AG04450 (cell line): ENCODE measurements at regions of chr17 and their contacts with region 1.

Region 1: DNA sequence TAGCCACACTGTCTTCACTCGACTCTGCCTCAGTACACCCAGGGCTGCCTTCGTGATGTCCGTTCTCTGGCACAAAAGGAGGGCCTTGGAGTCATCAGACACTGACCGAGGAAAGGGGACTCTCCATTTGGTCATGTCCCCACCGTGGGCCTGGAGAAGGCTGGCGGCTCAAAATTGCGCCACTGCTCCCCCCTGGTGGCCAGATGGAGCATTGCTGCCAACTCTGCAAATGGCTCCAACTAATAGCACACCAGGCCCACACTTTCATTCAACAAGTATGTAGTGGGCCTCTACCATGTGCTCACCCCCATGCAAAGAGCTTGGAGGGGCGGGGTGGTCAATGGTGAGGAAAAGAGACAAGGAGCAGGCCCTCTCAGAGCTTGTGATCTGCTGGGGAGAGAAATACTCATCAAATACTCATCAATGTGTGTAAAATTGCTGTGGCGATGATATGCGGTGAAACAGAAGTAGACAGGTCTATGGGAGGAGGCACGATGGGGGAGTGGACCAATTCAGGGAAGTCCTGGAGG is 5.2 kb upstream of the GRIN2C start:
- DNase-seq: no peak
- H3K4me3 ChIP-seq: no peak overlapping the region
- H3K27ac ChIP-seq: no peak overlapping the region
- H3K27me3 ChIP-seq: peaks cover 17% of the 10 kb centered on the region
- CTCF ChIP-seq: peak; percentile 94

Region 2: GRCh38 chr17:74736513-74737298 is 128.2 kb before region 1 on chr17 and contains the start of gene RAB37:
- CTCF ChIA-PET with region 1: interaction called, 11 read pairs
- POLR2A ChIA-PET with region 1: no interaction called
- DNase-seq: no peak
- H3K4me3 ChIP-seq: no peak within 1 kb of the TSS
- H3K27ac ChIP-seq: no peak within 1 kb of the TSS
- H3K27me3 ChIP-seq: peaks cover 43% of the 10 kb centered on the region
- CTCF ChIP-seq: no peak
- polyA plus RNA-seq, gene RAB37: 0.16 and 0.21 TPM in 2 replicates

Region 3: GRCh38 chr17:74744714-74745547 is 120.0 kb before region 1 on chr17:
- CTCF ChIA-PET with region 1: interaction called, 84 read pairs
- POLR2A ChIA-PET with region 1: no interaction called
- DNase-seq: no peak
- H3K4me3 ChIP-seq: 0 out of 2 replicates have a peak overlapping the region, but pooled peaks have one; percentile 3
- H3K27ac ChIP-seq: no peak overlapping the region
- H3K27me3 ChIP-seq: peaks cover 7% of the 10 kb centered on the region
- CTCF ChIP-seq: peak; percentile 99

Region 4: GRCh38 chr17:74759243-74759801 is 105.6 kb before region 1 on chr17:
- CTCF ChIA-PET with region 1: interaction called, 12 read pairs
- POLR2A ChIA-PET with region 1: no interaction called
- DNase-seq: no peak
- H3K4me3 ChIP-seq: no peak overlapping the region
- H3K27ac ChIP-seq: no peak overlapping the region
- H3K27me3 ChIP-seq: no peaks in the 10 kb centered on the region
- CTCF ChIP-seq: no peak

Region 5: GRCh38 chr17:74842599-74843351 is 22.2 kb before region 1 on chr17:
- CTCF ChIA-PET with region 1: interaction called, 42 read pairs
- POLR2A ChIA-PET with region 1: interaction called, 3 read pairs
- DNase-seq: no peak
- H3K4me3 ChIP-seq: peak overlapping the region; percentile 42; the same call in 1 of the 2 replicates
- H3K27ac ChIP-seq: no peak overlapping the region
- H3K27me3 ChIP-seq: peaks cover 5% of the 10 kb centered on the region
- CTCF ChIP-seq: peak; percentile 37; the same call in 1 of the 2 replicates

Region 6: DNA sequence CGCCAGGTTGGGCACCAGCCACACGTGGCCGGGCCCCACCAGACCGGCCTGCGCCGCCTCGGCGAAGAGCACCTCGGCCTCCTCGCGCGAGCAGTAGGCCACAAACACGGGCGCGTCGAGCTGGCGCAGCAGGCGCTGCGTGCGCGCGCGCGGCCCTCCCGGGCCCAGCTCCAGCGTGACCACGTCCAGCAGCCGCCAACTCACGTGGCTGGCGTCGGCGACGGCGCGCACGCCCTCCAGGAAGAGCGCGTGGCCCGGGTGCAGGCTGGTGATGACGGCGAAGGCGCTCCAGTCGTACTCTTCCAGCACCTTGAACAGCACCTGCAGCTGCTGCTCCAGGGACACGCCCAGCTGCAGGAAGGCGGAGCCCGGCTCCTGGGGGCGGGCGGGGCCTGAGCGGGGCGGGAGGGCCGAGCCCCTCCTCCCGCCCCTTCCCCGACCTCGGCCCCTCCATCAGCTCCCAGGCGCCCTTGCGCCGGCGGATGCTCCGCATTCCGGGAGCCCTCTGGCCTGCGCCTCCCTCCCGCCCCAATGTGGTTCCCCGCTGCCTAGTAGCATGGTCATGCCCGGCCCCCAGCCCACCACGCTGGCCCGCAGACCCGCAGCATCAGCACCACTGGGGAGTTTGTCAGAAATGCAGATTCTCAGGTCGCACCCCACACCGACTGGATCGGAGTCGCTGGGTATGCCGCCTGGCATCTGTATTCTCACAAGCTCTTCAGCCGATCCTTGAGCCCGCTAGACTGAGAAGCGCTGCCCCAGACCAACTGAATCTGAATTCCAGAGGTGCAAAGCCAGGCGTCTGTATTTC is 12.5 kb before region 1 on chr17:
- CTCF ChIA-PET with region 1: interaction called, 42 read pairs
- POLR2A ChIA-PET with region 1: interaction called, 3 read pairs
- DNase-seq: no peak
- H3K4me3 ChIP-seq: no peak overlapping the region
- H3K27ac ChIP-seq: no peak overlapping the region
- H3K27me3 ChIP-seq: peaks cover 63% of the 10 kb centered on the region
- CTCF ChIP-seq: no peak

Region 7: GRCh38 chr17:75087558-75088453 is 222.9 kb after region 1 on chr17 and contains the start of gene SLC16A5:
- CTCF ChIA-PET with region 1: no interaction called
- POLR2A ChIA-PET with region 1: no interaction called
- DNase-seq: no peak
- H3K4me3 ChIP-seq: peak within 1 kb of the TSS; percentile 61
- H3K27ac ChIP-seq: peak within 1 kb of the TSS; percentile 75
- H3K27me3 ChIP-seq: no peaks in the 10 kb centered on the region
- CTCF ChIP-seq: no peak
- polyA plus RNA-seq, gene SLC16A5: 2.9 and 3.6 TPM in 2 replicates